CD8-positive, alpha-beta T cell (primary cell): ENCODE measurements at regions of chr6 and their contacts with region 1.

Region 1: DNA sequence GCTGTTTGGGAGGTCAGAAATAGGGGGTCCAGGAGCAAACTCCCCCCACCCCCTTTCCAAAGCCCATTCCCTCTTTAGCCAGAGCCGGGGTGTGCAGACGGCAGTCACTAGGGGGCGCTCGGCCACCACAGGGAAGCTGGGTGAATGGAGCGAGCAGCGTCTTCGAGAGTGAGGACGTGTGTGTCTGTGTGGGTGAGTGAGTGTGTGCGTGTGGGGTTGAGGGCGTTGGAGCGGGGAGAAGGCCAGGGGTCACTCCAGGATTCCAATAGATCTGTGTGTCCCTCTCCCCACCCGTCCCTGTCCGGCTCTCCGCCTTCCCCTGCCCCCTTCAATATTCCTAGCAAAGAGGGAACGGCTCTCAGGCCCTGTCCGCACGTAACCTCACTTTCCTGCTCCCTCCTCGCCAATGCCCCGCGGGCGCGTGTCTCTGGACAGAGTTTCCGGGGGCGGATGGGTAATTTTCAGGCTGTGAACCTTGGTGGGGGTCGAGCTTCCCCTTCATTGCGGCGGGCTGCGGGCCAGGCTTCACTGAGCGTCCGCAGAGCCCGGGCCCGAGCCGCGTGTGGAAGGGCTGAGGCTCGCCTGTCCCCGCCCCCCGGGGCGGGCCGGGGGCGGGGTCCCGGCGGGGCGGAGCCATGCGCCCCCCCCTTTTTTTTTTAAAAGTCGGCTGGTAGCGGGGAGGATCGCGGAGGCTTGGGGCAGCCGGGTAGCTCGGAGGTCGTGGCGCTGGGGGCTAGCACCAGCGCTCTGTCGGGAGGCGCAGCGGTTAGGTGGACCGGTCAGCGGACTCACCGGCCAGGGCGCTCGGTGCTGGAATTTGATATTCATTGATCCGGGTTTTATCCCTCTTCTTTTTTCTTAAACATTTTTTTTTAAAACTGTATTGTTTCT is at the start of gene VEGFA:
- DNase-seq: peak; percentile 72 to 92 (median 90)
- ATAC-seq: peak; percentile 80
- H3K4me3 ChIP-seq: peak within 1 kb of the TSS; percentile 64 to 88
- H3K4me3 Mint-ChIP-seq: peak within 1 kb of the TSS; percentile 92
- H3K27ac ChIP-seq: peak within 1 kb of the TSS in 1 of 2 experiments; percentile 27
- H3K27ac Mint-ChIP-seq: peak within 1 kb of the TSS; percentile 23
- H3K4me1 ChIP-seq: peaks cover 6% of the 10 kb centered on the region
- H3K4me1 Mint-ChIP-seq: peaks cover 13% of the 10 kb centered on the region
- H3K27me3 ChIP-seq: peaks cover 0 to 20% of the 10 kb centered on the region in 2 experiments
- H3K27me3 Mint-ChIP-seq: peaks cover 28% of the 10 kb centered on the region
- CTCF ChIP-seq: peak; percentile 96
- total RNA-seq, gene VEGFA: 4.6 to 5.3 TPM

Region 2: GRCh38 chr6:43667245-43668150 is 102.3 kb before region 1 on chr6:
- CTCF ChIA-PET with region 1: interaction called, 25 read pairs
- POLR2A ChIA-PET with region 1: interaction called, 3 read pairs
- intact Hi-C with region 1: loop called (anchors 1 to 2 kb)
- DNase-seq: peak; percentile 72 to 85 (median 77)
- ATAC-seq: peak; percentile 83
- H3K4me3 ChIP-seq: no peak overlapping the region
- H3K4me3 Mint-ChIP-seq: peak overlapping the region; percentile 63
- H3K27ac ChIP-seq: no peak overlapping the region
- H3K27ac Mint-ChIP-seq: peak overlapping the region; percentile 81
- H3K4me1 ChIP-seq: peaks cover 14% of the 10 kb centered on the region
- H3K4me1 Mint-ChIP-seq: peaks cover 18% of the 10 kb centered on the region
- H3K27me3 ChIP-seq: no peaks in the 10 kb centered on the region
- H3K27me3 Mint-ChIP-seq: no peaks in the 10 kb centered on the region
- CTCF ChIP-seq: peak; percentile 96

Region 3: GRCh38 chr6:43736211-43736786 is 33.5 kb before region 1 on chr6:
- CTCF ChIA-PET with region 1: interaction called, 10 read pairs
- POLR2A ChIA-PET with region 1: no interaction called
- intact Hi-C with region 1: no loop called
- DNase-seq: no peak
- ATAC-seq: no peak
- H3K4me3 ChIP-seq: no peak overlapping the region
- H3K4me3 Mint-ChIP-seq: no peak overlapping the region
- H3K27ac ChIP-seq: no peak overlapping the region
- H3K27ac Mint-ChIP-seq: no peak overlapping the region
- H3K4me1 ChIP-seq: peaks cover 18% of the 10 kb centered on the region
- H3K4me1 Mint-ChIP-seq: peaks cover 7% of the 10 kb centered on the region
- H3K27me3 ChIP-seq: no peaks in the 10 kb centered on the region
- H3K27me3 Mint-ChIP-seq: no peaks in the 10 kb centered on the region
- CTCF ChIP-seq: no peak

Region 4: GRCh38 chr6:43758617-43759050 is 11.1 kb before region 1 on chr6:
- CTCF ChIA-PET with region 1: interaction called, 19 read pairs
- POLR2A ChIA-PET with region 1: no interaction called
- intact Hi-C with region 1: no loop called
- DNase-seq: peak in 2 of 9 experiments; percentile 16 to 27
- ATAC-seq: peak; percentile 48
- H3K4me3 ChIP-seq: no peak overlapping the region
- H3K4me3 Mint-ChIP-seq: no peak overlapping the region
- H3K27ac ChIP-seq: no peak overlapping the region
- H3K27ac Mint-ChIP-seq: no peak overlapping the region
- H3K4me1 ChIP-seq: no peaks in the 10 kb centered on the region
- H3K4me1 Mint-ChIP-seq: no peaks in the 10 kb centered on the region
- H3K27me3 ChIP-seq: no peaks in the 10 kb centered on the region
- H3K27me3 Mint-ChIP-seq: no peaks in the 10 kb centered on the region
- CTCF ChIP-seq: peak; percentile 32

Region 5: GRCh38 chr6:44002593-44003344 is 233.0 kb after region 1 on chr6:
- CTCF ChIA-PET with region 1: no interaction called
- POLR2A ChIA-PET with region 1: no interaction called
- intact Hi-C with region 1: loop called (anchors 2 to 5 kb)
- DNase-seq: peak in 8 of 9 experiments; percentile 39 to 71 (median 60)
- ATAC-seq: peak; percentile 73
- H3K4me3 ChIP-seq: peak overlapping the region; percentile 40 to 52
- H3K4me3 Mint-ChIP-seq: peak overlapping the region; percentile 76
- H3K27ac ChIP-seq: no peak overlapping the region
- H3K27ac Mint-ChIP-seq: no peak overlapping the region
- H3K4me1 ChIP-seq: peaks cover 9% of the 10 kb centered on the region
- H3K4me1 Mint-ChIP-seq: peaks cover 11% of the 10 kb centered on the region
- H3K27me3 ChIP-seq: peaks cover 15 to 22% of the 10 kb centered on the region in 2 experiments
- H3K27me3 Mint-ChIP-seq: peaks cover 43% of the 10 kb centered on the region
- CTCF ChIP-seq: no peak

Region 6: GRCh38 chr6:44151348-44152108 is 381.8 kb after region 1 on chr6:
- CTCF ChIA-PET with region 1: interaction called, 3 read pairs
- POLR2A ChIA-PET with region 1: no interaction called
- intact Hi-C with region 1: loop called (anchors 5 kb)
- DNase-seq: peak; percentile 63 to 88 (median 80)
- ATAC-seq: peak; percentile 93
- H3K4me3 ChIP-seq: peak overlapping the region in 1 of 2 experiments; percentile 20
- H3K4me3 Mint-ChIP-seq: no peak overlapping the region
- H3K27ac ChIP-seq: no peak overlapping the region
- H3K27ac Mint-ChIP-seq: no peak overlapping the region
- H3K4me1 ChIP-seq: peaks cover 8% of the 10 kb centered on the region
- H3K4me1 Mint-ChIP-seq: peaks cover 2% of the 10 kb centered on the region
- H3K27me3 ChIP-seq: no peaks in the 10 kb centered on the region
- H3K27me3 Mint-ChIP-seq: no peaks in the 10 kb centered on the region
- CTCF ChIP-seq: peak; percentile 99

Region 7: GRCh38 chr6:44312901-44313788 is 543.4 kb after region 1 on chr6 and contains the start of gene AARS2:
- CTCF ChIA-PET with region 1: no interaction called
- POLR2A ChIA-PET with region 1: no interaction called
- intact Hi-C with region 1: loop called in 1 of 2 experiments (anchors 5 kb)
- DNase-seq: peak; percentile 87 to 98 (median 91)
- ATAC-seq: peak; percentile 93
- H3K4me3 ChIP-seq: peak within 1 kb of the TSS; percentile 82 to 92
- H3K4me3 Mint-ChIP-seq: peak within 1 kb of the TSS; percentile 98
- H3K27ac ChIP-seq: peak within 1 kb of the TSS; percentile 66 to 78
- H3K27ac Mint-ChIP-seq: peak within 1 kb of the TSS; percentile 95
- H3K4me1 ChIP-seq: peaks cover 11% of the 10 kb centered on the region
- H3K4me1 Mint-ChIP-seq: peaks cover 13% of the 10 kb centered on the region
- H3K27me3 ChIP-seq: no peaks in the 10 kb centered on the region
- H3K27me3 Mint-ChIP-seq: peaks cover 6% of the 10 kb centered on the region
- CTCF ChIP-seq: peak; percentile 91
- total RNA-seq, gene AARS2: 13.5 to 14.7 TPM